ENCODE measurements at regions of chr15 and their contacts with region 1.

Region 1: DNA sequence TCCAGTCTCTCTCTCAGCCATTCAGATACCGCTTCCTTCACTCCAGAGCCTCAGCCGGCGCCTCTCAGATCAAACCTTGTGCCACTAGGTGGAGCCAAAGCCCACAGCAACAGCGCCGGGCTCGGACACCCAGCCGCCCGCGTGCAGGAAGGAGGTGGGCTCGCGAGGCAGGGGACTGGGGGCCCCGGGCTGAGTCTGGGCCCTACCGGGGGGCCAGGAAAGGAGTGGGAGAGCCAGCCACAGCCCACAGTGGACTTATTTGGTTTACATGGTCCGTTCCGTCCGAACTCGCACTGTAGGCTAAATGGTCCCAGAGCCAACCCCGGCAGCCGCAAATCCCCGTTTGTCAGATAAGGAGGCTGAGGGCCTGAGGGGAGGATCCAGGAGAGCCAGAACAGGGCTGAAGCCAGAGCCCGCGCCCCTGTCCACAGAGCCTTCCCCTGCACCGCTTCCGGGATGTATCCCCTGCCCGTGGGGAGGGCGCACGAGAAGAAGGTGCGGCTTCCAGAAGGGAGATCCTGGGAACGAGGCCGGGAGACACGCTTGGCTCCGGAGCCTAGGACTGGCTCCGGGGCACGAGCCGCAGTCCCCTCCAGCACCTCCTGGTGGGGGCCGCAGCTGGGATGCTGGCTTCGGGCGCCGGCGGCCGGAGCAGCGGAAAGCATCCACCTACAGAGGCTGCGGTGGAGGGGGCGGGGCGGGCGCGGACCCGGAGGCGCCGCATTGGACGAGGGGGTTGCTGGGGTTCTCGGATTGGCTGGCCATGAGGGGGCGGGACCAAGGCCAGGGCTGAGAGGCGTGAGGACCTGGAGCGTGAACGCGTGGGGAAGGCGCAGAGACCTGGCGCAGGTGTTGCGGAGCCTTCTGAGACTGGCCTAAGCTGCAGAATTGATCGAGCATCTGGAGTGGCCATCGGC is 6.5 kb upstream of the CYP11A1 start:
- DNase-seq: peak; percentile 96
- H3K4me3 ChIP-seq: peak overlapping the region; percentile 3 to 55 (median 3)
- H3K27ac ChIP-seq: no peak overlapping the region
- H3K4me1 ChIP-seq: peaks cover 7 to 11% of the 10 kb centered on the region in 2 donors
- H3K27me3 ChIP-seq: no peaks in the 10 kb centered on the region
- CTCF ChIP-seq: peak; percentile 48 to 91 (median 81)
- POLR2A ChIP-seq: no peak

Region 2: GRCh38 chr15:74438721-74439316 is 64.8 kb after region 1 on chr15:
- intact Hi-C with region 1: loop called (anchors 2 kb)
- DNase-seq: peak; percentile 71 to 76
- H3K4me3 ChIP-seq: no peak overlapping the region
- H3K27ac ChIP-seq: no peak overlapping the region
- H3K4me1 ChIP-seq: peaks cover 0 to 13% of the 10 kb centered on the region in 2 donors
- H3K27me3 ChIP-seq: no peaks in the 10 kb centered on the region
- CTCF ChIP-seq: peak; percentile 53 to 89 (median 76)
- POLR2A ChIP-seq: no peak